Panc1 (cell line): ENCODE measurements at regions of chr10 and their contacts with region 1.

Region 1: GRCh38 chr10:13354783-13355182 is 6.7 kb upstream of the SEPHS1 start:
- DNase-seq: no peak
- ATAC-seq: no peak
- H3K4me3 ChIP-seq: no peak overlapping the region
- H3K27ac ChIP-seq: no peak overlapping the region
- H3K4me1 ChIP-seq: no peaks in the 10 kb centered on the region
- H3K27me3 ChIP-seq: 0 out of 2 replicates have a peak, but pooled peaks cover 2% of the 10 kb centered on the region
- CTCF ChIP-seq: no peak

Region 2: GRCh38 chr10:13404305-13404759 is 49.5 kb after region 1 on chr10:
- CTCF ChIA-PET with region 1: no interaction called
- POLR2A ChIA-PET with region 1: no interaction called
- in situ Hi-C with region 1: no loop called
- intact Hi-C with region 1: no loop called
- DNase-seq: no peak
- ATAC-seq: no peak
- H3K4me3 ChIP-seq: no peak overlapping the region
- H3K27ac ChIP-seq: no peak overlapping the region
- H3K4me1 ChIP-seq: no peaks in the 10 kb centered on the region
- H3K27me3 ChIP-seq: no peaks in the 10 kb centered on the region
- CTCF ChIP-seq: no peak

Region 3: GRCh38 chr10:13536674-13537366 is 182.0 kb after region 1 on chr10:
- CTCF ChIA-PET with region 1: interaction called, 10 read pairs
- POLR2A ChIA-PET with region 1: interaction called, 3 read pairs
- in situ Hi-C with region 1: no loop called
- intact Hi-C with region 1: no loop called
- DNase-seq: peak; percentile 10
- ATAC-seq: peak; percentile 97
- H3K4me3 ChIP-seq: no peak overlapping the region
- H3K27ac ChIP-seq: no peak overlapping the region
- H3K4me1 ChIP-seq: no peaks in the 10 kb centered on the region
- H3K27me3 ChIP-seq: peaks cover 3% of the 10 kb centered on the region; the same call in 1 of the 2 replicates
- CTCF ChIP-seq: peak; percentile 84

Region 4: DNA sequence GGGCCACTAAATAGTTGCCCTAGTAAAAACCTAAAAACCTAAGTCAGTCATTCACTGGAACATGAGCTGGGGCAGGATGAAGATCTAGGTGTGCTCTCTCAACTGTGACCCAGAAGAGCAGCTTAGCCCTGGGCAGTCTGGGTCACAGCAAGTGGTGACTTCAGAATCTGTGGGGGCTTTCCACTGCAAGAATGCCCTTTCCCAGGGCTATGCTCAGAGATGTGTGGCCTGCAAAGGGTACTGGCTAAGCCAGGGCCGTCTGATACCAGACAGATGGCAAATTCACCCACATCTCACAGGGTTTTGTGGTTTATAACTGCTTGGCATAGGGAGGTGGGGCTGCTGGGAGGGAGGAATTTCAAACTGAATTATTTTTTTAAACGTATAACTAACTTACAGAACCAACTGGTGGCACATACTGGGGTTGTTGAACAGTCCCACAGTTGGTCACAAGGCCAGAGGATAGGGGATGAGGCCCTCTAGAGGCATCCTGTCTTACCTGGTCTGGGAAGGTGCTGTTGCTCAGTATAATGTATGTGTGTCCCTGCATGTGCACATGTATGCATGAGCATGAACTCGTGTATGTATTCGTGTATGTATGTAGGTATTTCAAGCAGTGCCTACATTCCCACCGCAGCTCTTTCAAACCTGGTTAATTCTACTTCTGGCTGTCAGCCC is 295.2 kb after region 1 on chr10:
- CTCF ChIA-PET with region 1: no interaction called
- POLR2A ChIA-PET with region 1: no interaction called
- in situ Hi-C with region 1: no loop called
- intact Hi-C with region 1: no loop called
- DNase-seq: no peak
- ATAC-seq: no peak
- H3K4me3 ChIP-seq: no peak overlapping the region
- H3K27ac ChIP-seq: no peak overlapping the region
- H3K4me1 ChIP-seq: no peaks in the 10 kb centered on the region
- H3K27me3 ChIP-seq: no peaks in the 10 kb centered on the region
- CTCF ChIP-seq: 0 out of 2 replicates have a peak, but pooled peaks have one; percentile 4